Naive thymus-derived CD4-positive, alpha-beta T cell (primary cell): ENCODE measurements at regions of chr22 and their contacts with region 1.

Region 1: DNA sequence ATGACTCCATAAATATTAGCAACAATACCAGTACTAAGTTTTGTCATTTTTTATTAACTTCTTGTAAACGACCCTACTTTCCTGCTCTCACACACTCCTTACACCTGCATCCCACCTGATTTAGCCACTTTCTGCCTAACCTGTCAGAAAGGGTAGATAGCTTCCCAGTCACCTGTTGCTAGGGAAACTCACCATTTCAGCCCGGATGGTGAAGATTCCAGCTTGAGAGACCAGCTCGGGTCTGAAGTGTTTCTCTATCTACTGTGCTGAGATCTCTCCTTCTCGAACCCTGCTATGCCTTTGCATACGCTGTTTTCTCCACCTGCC is at the start of gene PARVG:
- DNase-seq: peak in 8 of 9 donors; percentile 32 to 79 (median 75)
- ATAC-seq: peak; percentile 73
- H3K4me3 ChIP-seq: peak within 1 kb of the TSS; percentile 83
- H3K4me3 Mint-ChIP-seq: peak within 1 kb of the TSS; percentile 84 to 97 (median 92)
- H3K27ac ChIP-seq: peak within 1 kb of the TSS; percentile 80
- H3K27ac Mint-ChIP-seq: peak within 1 kb of the TSS; percentile 88 to 98 (median 95)
- H3K4me1 ChIP-seq: peaks cover 11 to 14% of the 10 kb centered on the region in 2 donors
- H3K4me1 Mint-ChIP-seq: peaks cover 15 to 33% (median 30%) of the 10 kb centered on the region in 7 donors
- H3K27me3 ChIP-seq: no peaks in the 10 kb centered on the region
- H3K27me3 Mint-ChIP-seq: peaks cover 0 to 10% (median 0%) of the 10 kb centered on the region in 5 donors
- total RNA-seq, gene PARVG: 142 to 209 (median 173) TPM

Region 2: DNA sequence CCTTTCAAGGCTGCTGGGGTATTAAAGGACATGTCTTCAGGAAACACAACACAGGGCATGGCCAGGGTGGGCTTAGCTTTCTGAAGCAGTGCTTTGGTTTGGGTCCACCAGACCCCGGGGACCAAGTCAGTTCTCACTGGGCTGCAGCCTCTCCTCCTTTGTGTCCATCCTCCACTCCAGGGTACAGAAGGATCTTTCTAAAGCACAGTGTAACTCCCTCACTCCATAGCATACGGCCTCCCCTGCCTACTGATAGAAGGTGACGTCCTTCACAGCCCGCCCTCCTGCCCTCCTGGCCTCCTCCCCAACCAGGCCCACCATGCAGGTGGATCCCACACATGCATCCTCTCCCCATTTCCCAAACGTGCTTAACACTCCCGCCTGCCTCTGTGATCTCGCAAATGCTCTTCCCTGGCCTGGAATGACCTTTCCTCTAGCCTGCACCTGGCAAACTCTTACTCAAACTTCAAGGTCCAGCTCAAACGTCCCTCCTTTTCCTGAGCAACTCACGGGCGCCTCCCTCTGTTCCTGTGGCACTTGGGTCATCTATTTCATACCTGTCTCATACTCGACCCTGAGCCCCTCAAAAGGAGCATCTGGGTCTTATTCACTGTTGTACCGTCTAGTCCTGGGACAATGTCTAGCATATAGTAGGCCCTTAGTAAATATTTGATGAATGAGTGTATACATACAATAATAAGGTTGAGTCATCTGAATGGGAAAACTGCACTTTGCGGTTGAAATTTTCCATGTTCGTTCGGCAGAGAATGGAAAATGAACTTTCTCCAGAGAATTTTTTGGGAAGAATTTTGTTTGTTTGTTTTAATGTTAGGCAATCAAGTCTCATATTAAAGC is 556.3 kb before region 1 on chr22:
- CTCF ChIA-PET with region 1: no interaction called
- POLR2A ChIA-PET with region 1: no interaction called
- intact Hi-C with region 1: no loop called
- DNase-seq: no peak
- ATAC-seq: no peak
- H3K4me3 ChIP-seq: no peak overlapping the region
- H3K4me3 Mint-ChIP-seq: no peak overlapping the region
- H3K27ac ChIP-seq: no peak overlapping the region
- H3K27ac Mint-ChIP-seq: no peak overlapping the region
- H3K4me1 ChIP-seq: no peaks in the 10 kb centered on the region
- H3K4me1 Mint-ChIP-seq: no peaks in the 10 kb centered on the region
- H3K27me3 ChIP-seq: no peaks in the 10 kb centered on the region
- H3K27me3 Mint-ChIP-seq: peaks cover 0 to 7% (median 3%) of the 10 kb centered on the region in 5 donors

Region 3: DNA sequence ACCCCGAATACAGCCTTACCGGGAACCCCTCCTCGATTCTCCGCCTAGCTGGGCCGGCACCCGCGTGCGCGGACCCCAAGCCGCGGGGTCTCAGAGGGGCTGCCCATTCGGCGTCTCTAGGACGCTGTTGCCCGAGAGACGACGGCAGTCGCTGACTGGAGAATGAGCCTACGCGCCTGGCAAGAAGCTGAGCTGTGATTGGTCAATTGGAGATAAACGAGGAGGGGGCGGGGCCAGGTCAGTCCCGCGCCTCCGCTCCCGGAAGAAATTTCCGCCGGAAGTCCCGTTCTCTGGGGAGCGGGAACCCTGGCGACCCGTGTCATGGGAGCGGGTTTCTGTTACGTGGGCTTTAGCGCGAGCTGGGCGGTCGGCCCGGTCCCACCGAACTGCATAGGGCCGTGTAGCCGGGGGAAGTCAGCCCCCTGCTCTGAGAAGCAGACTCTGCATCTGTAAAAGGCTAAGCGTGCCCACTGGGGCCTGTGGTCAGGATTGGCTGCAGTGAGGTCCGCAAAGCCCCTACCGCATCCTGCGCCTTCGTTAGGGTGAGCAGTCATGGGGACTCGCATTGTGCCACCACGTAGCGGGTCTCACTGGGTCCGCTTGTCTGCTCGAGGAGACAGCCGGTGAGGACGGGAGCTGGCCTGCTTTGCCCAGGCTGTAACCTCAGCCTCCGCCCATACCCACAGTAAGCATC is 368.4 kb before region 1 on chr22 and contains the start of gene EFCAB6:
- CTCF ChIA-PET with region 1: no interaction called
- POLR2A ChIA-PET with region 1: no interaction called
- intact Hi-C with region 1: loop called (anchors 2 to 10 kb)
- DNase-seq: peak; percentile 74 to 88 (median 86)
- ATAC-seq: peak; percentile 97
- H3K4me3 ChIP-seq: peak within 1 kb of the TSS; percentile 93
- H3K4me3 Mint-ChIP-seq: peak within 1 kb of the TSS; percentile 82 to 98 (median 94)
- H3K27ac ChIP-seq: peak within 1 kb of the TSS; percentile 82
- H3K27ac Mint-ChIP-seq: peak within 1 kb of the TSS; percentile 87 to 95 (median 92)
- H3K4me1 ChIP-seq: peaks cover 7 to 10% of the 10 kb centered on the region in 2 donors
- H3K4me1 Mint-ChIP-seq: peaks cover 19 to 35% (median 31%) of the 10 kb centered on the region in 7 donors
- H3K27me3 ChIP-seq: no peaks in the 10 kb centered on the region
- H3K27me3 Mint-ChIP-seq: peaks cover 0 to 2% (median 0%) of the 10 kb centered on the region in 5 donors
- total RNA-seq, gene EFCAB6: 0.16 to 1.4 (median 0.90) TPM in 4 of 5 experiments, not detected in the other

Region 4: GRCh38 chr22:43964314-43964857 is 216.3 kb before region 1 on chr22:
- CTCF ChIA-PET with region 1: no interaction called
- POLR2A ChIA-PET with region 1: no interaction called
- intact Hi-C with region 1: no loop called
- DNase-seq: no peak
- ATAC-seq: no peak
- H3K4me3 ChIP-seq: no peak overlapping the region
- H3K4me3 Mint-ChIP-seq: no peak overlapping the region
- H3K27ac ChIP-seq: no peak overlapping the region
- H3K27ac Mint-ChIP-seq: no peak overlapping the region
- H3K4me1 ChIP-seq: no peaks in the 10 kb centered on the region
- H3K4me1 Mint-ChIP-seq: peaks cover 0 to 21% (median 15%) of the 10 kb centered on the region in 7 donors
- H3K27me3 ChIP-seq: no peaks in the 10 kb centered on the region
- H3K27me3 Mint-ChIP-seq: no peaks in the 10 kb centered on the region

Region 5: DNA sequence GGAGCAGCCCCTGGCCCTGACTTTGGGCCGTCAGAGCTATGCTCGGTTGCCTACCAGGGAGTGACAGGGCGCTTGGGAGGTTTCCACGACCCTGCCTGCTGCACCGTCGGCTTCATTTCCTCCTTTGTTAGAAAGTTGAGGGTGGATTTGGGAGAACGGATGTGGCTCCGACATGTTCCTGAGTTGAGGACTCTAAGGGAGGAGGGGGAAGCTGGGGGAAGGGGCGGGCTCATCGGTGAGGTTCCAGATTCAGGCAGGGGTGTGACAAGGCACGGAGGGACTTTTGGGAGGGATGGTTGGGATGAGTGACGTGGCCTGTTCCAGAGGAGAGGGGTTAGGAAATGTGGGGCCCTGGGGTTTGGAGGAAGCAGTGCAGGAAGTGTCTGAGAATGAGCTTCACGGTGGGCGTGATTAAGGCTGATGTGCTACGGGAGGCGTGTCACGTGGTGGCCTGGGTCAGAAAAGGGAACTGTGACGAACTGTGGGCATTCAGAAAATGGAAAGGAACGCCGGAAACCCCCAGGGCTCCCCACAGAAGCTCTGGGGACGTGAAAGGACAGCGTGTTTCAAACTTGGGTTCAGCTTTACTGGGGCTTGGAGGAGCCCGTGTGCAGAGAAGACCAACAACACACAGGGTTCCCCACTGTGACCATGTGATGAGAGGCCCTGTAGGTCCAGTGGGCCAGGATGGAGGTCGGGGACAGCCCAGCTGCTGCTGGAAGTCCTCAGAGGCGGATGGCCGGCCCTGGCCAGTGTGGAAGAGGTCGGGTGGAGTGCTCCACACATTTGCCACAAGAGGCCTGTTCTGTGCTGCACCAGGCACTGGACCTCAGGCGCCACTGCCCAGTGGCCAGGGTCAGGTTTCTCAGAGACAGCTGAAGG is 153.8 kb before region 1 on chr22:
- CTCF ChIA-PET with region 1: no interaction called
- POLR2A ChIA-PET with region 1: no interaction called
- intact Hi-C with region 1: loop called in 1 of 2 experiments (anchors 5 kb)
- DNase-seq: peak in 6 of 9 donors; percentile 19 to 73 (median 34)
- ATAC-seq: peak; percentile 86
- H3K4me3 ChIP-seq: peak overlapping the region; percentile 54
- H3K4me3 Mint-ChIP-seq: peak overlapping the region; percentile 45 to 89 (median 76)
- H3K27ac ChIP-seq: peak overlapping the region; percentile 63
- H3K27ac Mint-ChIP-seq: peak overlapping the region in 7 of 9 donors; percentile 55 to 97 (median 78)
- H3K4me1 ChIP-seq: peaks cover 15 to 24% of the 10 kb centered on the region in 2 donors
- H3K4me1 Mint-ChIP-seq: peaks cover 28 to 68% (median 40%) of the 10 kb centered on the region in 7 donors
- H3K27me3 ChIP-seq: no peaks in the 10 kb centered on the region
- H3K27me3 Mint-ChIP-seq: peaks cover 0 to 32% (median 27%) of the 10 kb centered on the region in 5 donors

Region 6: GRCh38 chr22:44191036-44191454 is 10.4 kb after region 1 on chr22:
- CTCF ChIA-PET with region 1: no interaction called
- POLR2A ChIA-PET with region 1: interaction called, 7 read pairs
- intact Hi-C with region 1: loop called in 1 of 2 experiments (anchors 1 kb)
- DNase-seq: peak in 1 of 9 donors; percentile 49
- ATAC-seq: peak; percentile 20
- H3K4me3 ChIP-seq: no peak overlapping the region
- H3K4me3 Mint-ChIP-seq: no peak overlapping the region
- H3K27ac ChIP-seq: no peak overlapping the region
- H3K27ac Mint-ChIP-seq: peak overlapping the region in 1 of 9 donors; percentile 55
- H3K4me1 ChIP-seq: peaks cover 23 to 26% of the 10 kb centered on the region in 2 donors
- H3K4me1 Mint-ChIP-seq: peaks cover 27 to 38% (median 33%) of the 10 kb centered on the region in 7 donors
- H3K27me3 ChIP-seq: no peaks in the 10 kb centered on the region
- H3K27me3 Mint-ChIP-seq: no peaks in the 10 kb centered on the region

Region 7: GRCh38 chr22:44337678-44338004 is 157.0 kb after region 1 on chr22:
- CTCF ChIA-PET with region 1: no interaction called
- POLR2A ChIA-PET with region 1: no interaction called
- intact Hi-C with region 1: no loop called
- DNase-seq: no peak
- ATAC-seq: no peak
- H3K4me3 ChIP-seq: no peak overlapping the region
- H3K4me3 Mint-ChIP-seq: no peak overlapping the region
- H3K27ac ChIP-seq: no peak overlapping the region
- H3K27ac Mint-ChIP-seq: no peak overlapping the region
- H3K4me1 ChIP-seq: no peaks in the 10 kb centered on the region
- H3K4me1 Mint-ChIP-seq: no peaks in the 10 kb centered on the region
- H3K27me3 ChIP-seq: no peaks in the 10 kb centered on the region
- H3K27me3 Mint-ChIP-seq: peaks cover 0 to 5% (median 0%) of the 10 kb centered on the region in 5 donors

Region 8: GRCh38 chr22:44410451-44411061 is 229.9 kb after region 1 on chr22:
- CTCF ChIA-PET with region 1: no interaction called
- POLR2A ChIA-PET with region 1: no interaction called
- intact Hi-C with region 1: no loop called
- DNase-seq: no peak
- ATAC-seq: no peak
- H3K4me3 ChIP-seq: no peak overlapping the region
- H3K4me3 Mint-ChIP-seq: no peak overlapping the region
- H3K27ac ChIP-seq: no peak overlapping the region
- H3K27ac Mint-ChIP-seq: no peak overlapping the region
- H3K4me1 ChIP-seq: no peaks in the 10 kb centered on the region
- H3K4me1 Mint-ChIP-seq: no peaks in the 10 kb centered on the region
- H3K27me3 ChIP-seq: no peaks in the 10 kb centered on the region
- H3K27me3 Mint-ChIP-seq: peaks cover 0 to 5% (median 0%) of the 10 kb centered on the region in 5 donors

Region 9: DNA sequence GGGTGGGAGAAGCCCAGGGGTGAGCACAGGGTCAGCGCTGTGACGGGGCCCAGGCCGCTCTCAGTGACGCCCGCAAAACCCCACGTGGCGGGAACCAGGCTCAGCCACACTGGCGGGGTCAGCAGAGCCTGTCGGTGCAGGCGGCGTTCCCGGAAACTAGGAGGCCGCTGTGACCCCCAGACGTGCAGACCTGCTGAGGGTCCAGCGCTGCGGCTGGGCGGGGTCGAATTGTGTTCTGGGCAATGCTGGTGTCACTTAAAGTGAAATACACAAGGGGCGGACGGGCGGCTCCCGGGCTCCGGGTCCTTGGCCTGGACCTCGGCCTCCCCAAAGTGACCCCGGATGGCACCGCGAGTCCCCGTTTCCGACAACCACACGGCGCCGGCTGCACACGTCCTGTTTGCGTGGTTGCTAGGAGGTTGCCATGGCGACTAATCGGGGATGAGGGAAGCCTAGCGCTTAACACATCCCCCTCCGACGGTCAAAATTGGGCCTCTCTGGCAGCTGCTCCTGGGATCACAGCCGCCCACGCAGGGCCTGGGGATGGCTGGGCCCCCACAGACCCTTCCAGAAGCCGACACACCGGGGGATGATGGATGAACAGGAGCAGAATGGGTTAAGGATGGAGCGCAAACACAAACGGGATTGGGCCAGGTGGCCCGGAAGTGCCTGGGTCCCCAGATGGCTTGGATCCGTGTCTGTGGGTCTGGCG is 439.6 kb after region 1 on chr22:
- CTCF ChIA-PET with region 1: no interaction called
- POLR2A ChIA-PET with region 1: no interaction called
- intact Hi-C with region 1: loop called in 1 of 2 experiments (anchors 1 kb)
- DNase-seq: peak; percentile 68 to 90 (median 83)
- ATAC-seq: peak; percentile 88
- H3K4me3 ChIP-seq: no peak overlapping the region
- H3K4me3 Mint-ChIP-seq: no peak overlapping the region
- H3K27ac ChIP-seq: peak overlapping the region; percentile 44
- H3K27ac Mint-ChIP-seq: peak overlapping the region in 2 of 9 donors; percentile 87 to 97
- H3K4me1 ChIP-seq: peaks cover 6 to 12% of the 10 kb centered on the region in 2 donors
- H3K4me1 Mint-ChIP-seq: peaks cover 0 to 10% (median 6%) of the 10 kb centered on the region in 7 donors
- H3K27me3 ChIP-seq: no peaks in the 10 kb centered on the region
- H3K27me3 Mint-ChIP-seq: peaks cover 0 to 4% (median 0%) of the 10 kb centered on the region in 5 donors

Region 10: GRCh38 chr22:44684506-44685383 is 504.1 kb after region 1 on chr22:
- CTCF ChIA-PET with region 1: no interaction called
- POLR2A ChIA-PET with region 1: no interaction called
- intact Hi-C with region 1: loop called in 1 of 2 experiments (anchors 10 kb)
- DNase-seq: peak; percentile 58 to 84 (median 78)
- ATAC-seq: peak; percentile 95
- H3K4me3 ChIP-seq: no peak overlapping the region
- H3K4me3 Mint-ChIP-seq: peak overlapping the region in 8 of 10 donors; percentile 36 to 76 (median 52)
- H3K27ac ChIP-seq: no peak overlapping the region
- H3K27ac Mint-ChIP-seq: peak overlapping the region in 8 of 9 donors; percentile 43 to 84 (median 67)
- H3K4me1 ChIP-seq: peaks cover 16 to 39% of the 10 kb centered on the region in 2 donors
- H3K4me1 Mint-ChIP-seq: peaks cover 20 to 55% (median 37%) of the 10 kb centered on the region in 7 donors
- H3K27me3 ChIP-seq: no peaks in the 10 kb centered on the region
- H3K27me3 Mint-ChIP-seq: no peaks in the 10 kb centered on the region